Panc1 (cell line): ENCODE measurements at regions of chr2 and their contacts with region 1.

Region 1: GRCh38 chr2:38394903-38395341 is 17.8 kb upstream of the ATL2 start:
- DNase-seq: no peak
- ATAC-seq: peak; percentile 68
- H3K4me3 ChIP-seq: no peak overlapping the region
- H3K27ac ChIP-seq: no peak overlapping the region; the same call in 1 of the 2 replicates
- H3K4me1 ChIP-seq: peaks cover 3% of the 10 kb centered on the region
- H3K27me3 ChIP-seq: no peaks in the 10 kb centered on the region
- CTCF ChIP-seq: no peak

Region 2: DNA sequence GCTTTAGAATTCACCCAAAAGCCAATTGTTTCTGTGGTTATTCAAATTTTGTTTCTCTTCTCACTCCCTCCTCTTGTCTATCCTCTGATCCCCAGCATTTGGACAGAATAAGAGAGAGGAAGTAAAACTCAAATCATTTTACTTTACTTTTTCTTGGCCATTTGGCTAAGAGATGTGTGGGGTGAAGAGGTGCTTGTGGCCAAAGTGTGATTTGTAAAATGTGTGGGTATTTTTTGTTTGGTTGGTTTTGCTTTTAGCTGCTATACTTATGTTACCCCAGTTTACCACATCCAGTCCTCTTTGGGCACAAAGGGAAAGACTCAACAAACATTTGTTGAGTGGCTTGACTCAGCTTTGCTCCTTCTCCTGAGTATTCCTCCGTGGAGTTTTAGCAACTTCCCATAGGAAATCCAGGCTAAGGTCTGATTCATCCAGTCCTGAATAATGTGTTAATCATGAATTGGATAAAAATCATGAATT is 209.9 kb before region 1 on chr2:
- CTCF ChIA-PET with region 1: no interaction called
- POLR2A ChIA-PET with region 1: no interaction called
- in situ Hi-C with region 1: no loop called
- intact Hi-C with region 1: no loop called
- DNase-seq: no peak
- ATAC-seq: no peak
- H3K4me3 ChIP-seq: no peak overlapping the region
- H3K27ac ChIP-seq: no peak overlapping the region
- H3K4me1 ChIP-seq: no peaks in the 10 kb centered on the region
- H3K27me3 ChIP-seq: no peaks in the 10 kb centered on the region
- CTCF ChIP-seq: no peak

Region 3: GRCh38 chr2:38370664-38371063 is 24.3 kb before region 1 on chr2:
- CTCF ChIA-PET with region 1: interaction called, 12 read pairs
- POLR2A ChIA-PET with region 1: interaction called, 14 read pairs
- in situ Hi-C with region 1: no loop called
- intact Hi-C with region 1: no loop called
- DNase-seq: no peak
- ATAC-seq: peak; percentile 46; the same call in 1 of the 2 replicates
- H3K4me3 ChIP-seq: no peak overlapping the region
- H3K27ac ChIP-seq: no peak overlapping the region
- H3K4me1 ChIP-seq: peaks cover 27% of the 10 kb centered on the region
- H3K27me3 ChIP-seq: no peaks in the 10 kb centered on the region
- CTCF ChIP-seq: no peak

Region 4: GRCh38 chr2:38377050-38377828 is 17.7 kb before region 1 on chr2 and contains the start of gene ATL2:
- CTCF ChIA-PET with region 1: no interaction called
- POLR2A ChIA-PET with region 1: interaction called, 14 read pairs
- in situ Hi-C with region 1: no loop called
- intact Hi-C with region 1: no loop called
- DNase-seq: peak; percentile 43
- ATAC-seq: peak; percentile 92
- H3K4me3 ChIP-seq: peak within 1 kb of the TSS; percentile 82 to 95
- H3K27ac ChIP-seq: peak within 1 kb of the TSS; percentile 88
- H3K4me1 ChIP-seq: peaks cover 31% of the 10 kb centered on the region
- H3K27me3 ChIP-seq: no peaks in the 10 kb centered on the region
- CTCF ChIP-seq: no peak
- total RNA-seq, gene ATL2: 78.7 TPM

Region 5: DNA sequence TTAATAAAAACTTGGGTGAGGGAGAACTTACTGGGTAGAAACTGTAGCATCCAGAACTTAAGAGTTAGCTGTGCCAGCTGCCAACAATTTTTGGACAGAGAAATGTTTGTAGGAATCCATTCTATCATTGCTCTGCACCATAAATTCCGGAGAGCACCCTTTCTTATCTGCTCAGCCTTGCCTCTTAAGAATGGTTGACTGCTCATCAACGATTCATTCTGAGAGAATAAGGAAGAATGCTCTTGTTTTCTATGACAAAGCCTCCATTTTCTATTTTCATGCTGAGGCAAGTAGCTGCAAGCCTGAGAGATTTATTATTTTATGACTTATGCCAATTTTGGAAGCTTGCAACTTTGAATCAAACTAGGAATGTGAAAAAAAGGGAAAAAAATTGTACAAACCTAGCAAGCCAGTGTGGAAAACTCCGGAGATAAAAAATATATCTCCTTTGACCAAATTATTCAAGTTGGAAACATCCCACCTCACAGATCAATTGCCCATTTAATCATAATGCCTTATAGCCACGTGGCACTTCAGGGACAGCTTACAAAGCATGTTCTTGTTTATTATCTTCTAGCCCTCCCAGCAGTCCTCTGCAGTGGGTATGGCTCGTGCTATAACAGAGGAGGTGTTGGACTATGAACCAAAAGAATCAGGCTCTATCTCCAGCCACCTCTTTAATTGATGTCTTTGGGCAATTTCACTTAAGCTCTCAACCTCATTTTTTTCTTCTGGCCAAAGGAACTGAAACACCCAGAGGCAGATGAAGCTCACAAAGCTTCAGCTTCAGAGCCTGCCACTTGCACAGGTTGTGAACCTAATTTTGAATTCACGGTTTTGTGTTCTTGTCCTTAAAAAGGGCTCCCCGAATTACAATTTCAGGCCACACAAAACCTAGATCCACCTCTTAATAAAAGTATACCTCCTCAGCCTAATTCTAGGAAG is 23.1 kb after region 1 on chr2:
- CTCF ChIA-PET with region 1: no interaction called
- POLR2A ChIA-PET with region 1: no interaction called
- in situ Hi-C with region 1: no loop called
- intact Hi-C with region 1: no loop called
- DNase-seq: no peak
- ATAC-seq: no peak
- H3K4me3 ChIP-seq: no peak overlapping the region
- H3K27ac ChIP-seq: no peak overlapping the region
- H3K4me1 ChIP-seq: no peaks in the 10 kb centered on the region
- H3K27me3 ChIP-seq: no peaks in the 10 kb centered on the region; the same call in 1 of the 2 replicates
- CTCF ChIP-seq: no peak

Region 6: GRCh38 chr2:38909872-38910271 is 515.0 kb after region 1 on chr2:
- CTCF ChIA-PET with region 1: no interaction called
- POLR2A ChIA-PET with region 1: no interaction called
- in situ Hi-C with region 1: no loop called
- intact Hi-C with region 1: no loop called
- DNase-seq: no peak
- ATAC-seq: no peak
- H3K4me3 ChIP-seq: no peak overlapping the region
- H3K27ac ChIP-seq: no peak overlapping the region
- H3K4me1 ChIP-seq: no peaks in the 10 kb centered on the region
- H3K27me3 ChIP-seq: no peaks in the 10 kb centered on the region
- CTCF ChIP-seq: no peak